Right ventricle myocardium superior (tissue), 1 donor: ENCODE measurements at regions of chr4 and their contacts with region 1.

Region 1: DNA sequence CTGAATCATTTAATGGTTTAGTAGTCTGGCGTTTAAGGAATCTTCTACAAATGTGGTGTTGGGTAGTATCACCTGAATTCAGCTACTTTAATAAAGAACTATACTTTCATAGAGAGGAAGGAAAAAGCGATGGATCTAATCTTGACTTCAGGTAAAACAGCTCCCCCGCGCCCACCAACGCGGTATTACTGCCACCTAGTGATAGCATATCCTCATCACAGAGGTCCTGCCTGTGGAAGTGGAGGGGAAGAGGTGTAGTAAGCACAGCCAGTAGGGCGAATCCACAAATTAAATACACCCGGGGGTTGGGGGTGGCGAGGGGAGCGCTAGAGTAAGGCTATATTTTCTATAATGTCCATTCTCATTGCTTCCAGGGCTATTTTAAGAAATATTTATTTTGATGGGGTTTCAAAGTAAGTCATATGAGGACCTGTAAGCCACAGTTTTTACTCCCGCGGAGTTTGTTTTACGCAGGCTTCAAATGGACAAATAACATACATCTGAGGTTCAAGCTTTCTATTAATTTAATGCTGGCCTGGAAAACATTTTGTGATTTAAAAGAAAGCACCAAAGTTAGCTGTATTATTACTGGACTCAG is 8.3 kb upstream of the DAPP1 start:
- DNase-seq: peak; percentile 76
- ATAC-seq: peak; percentile 87

Region 2: GRCh38 chr4:99679204-99679603 is 129.2 kb before region 1 on chr4:
- intact Hi-C with region 1: loop called (anchors 10 kb)
- DNase-seq: peak; percentile 55
- ATAC-seq: peak; percentile 97

Region 3: DNA sequence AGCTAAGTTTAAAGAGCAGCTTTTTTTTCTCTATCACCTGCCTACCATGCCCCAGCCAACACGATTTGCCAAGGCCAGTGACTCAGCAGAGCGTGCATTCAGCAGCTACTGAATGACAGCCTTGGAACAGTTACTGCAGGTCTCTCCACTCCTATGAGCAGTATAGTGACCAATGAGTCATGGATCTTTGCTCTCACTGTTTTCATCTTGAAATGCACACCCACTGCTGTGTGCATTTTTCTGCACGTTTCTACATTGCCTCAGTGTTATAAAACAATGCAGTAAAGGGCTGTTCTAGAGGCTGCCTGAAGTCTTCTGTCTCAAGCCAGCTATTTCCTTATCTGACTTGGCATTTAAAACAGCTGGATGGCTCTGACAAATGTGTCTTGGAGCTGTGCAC is 84.7 kb before region 1 on chr4:
- intact Hi-C with region 1: loop called (anchors 10 kb)
- DNase-seq: peak; percentile 74
- ATAC-seq: peak; percentile 97